Endothelial cell of umbilical vein (primary cell): ENCODE measurements at regions of chr1 and their contacts with region 1.

Region 1: DNA sequence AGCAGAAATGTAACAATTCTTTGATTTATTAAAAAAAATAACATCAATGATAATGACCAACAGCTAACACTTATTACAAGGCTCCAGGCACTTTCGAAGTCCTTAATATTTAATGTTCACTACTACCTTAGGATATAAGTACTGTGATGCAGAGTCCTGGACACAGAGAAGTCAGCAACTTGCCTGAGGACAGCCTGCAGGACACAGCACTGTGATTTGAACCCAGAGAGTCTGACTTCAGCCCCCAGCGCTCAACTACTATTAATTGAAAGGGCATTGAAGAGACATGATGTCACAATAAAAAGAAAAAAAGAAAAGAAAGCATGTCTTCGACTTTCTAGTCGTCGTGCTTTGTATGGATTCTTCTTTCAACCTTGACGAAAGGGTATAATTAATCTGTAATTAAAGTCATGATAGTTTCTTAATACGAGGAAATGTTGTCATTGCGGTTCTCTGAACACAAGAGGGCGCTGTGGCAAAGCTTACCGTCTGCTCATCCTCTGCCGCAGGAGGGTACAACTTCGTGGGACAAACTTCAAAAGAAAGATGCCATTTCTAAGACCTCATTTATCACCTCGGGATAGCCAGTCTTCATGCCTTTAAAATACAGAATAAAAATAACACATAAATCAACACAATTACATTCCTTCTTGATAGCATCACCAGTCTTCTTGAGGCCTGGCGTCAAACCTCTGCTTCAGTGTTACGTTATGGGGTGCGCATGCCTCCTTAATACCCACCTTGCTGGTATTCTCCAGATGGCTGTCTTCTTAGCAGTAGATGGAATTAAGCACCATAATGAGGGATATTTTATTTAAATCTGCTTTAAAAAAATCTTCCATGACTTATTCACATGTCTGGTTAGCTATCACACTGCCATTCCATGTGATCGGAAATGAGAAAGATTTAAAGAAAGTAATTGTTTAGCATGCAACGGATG is 240.1 kb downstream of the DISC1 start:
- DNase-seq: peak; percentile 71
- H3K4me3 ChIP-seq: no peak overlapping the region
- H3K27ac ChIP-seq: no peak overlapping the region
- H3K4me1 ChIP-seq: no peaks in the 10 kb centered on the region
- H3K27me3 ChIP-seq: no peaks in the 10 kb centered on the region
- CTCF ChIP-seq: peak; percentile 73 to 77
- POLR2A ChIP-seq: no peak

Region 2: DNA sequence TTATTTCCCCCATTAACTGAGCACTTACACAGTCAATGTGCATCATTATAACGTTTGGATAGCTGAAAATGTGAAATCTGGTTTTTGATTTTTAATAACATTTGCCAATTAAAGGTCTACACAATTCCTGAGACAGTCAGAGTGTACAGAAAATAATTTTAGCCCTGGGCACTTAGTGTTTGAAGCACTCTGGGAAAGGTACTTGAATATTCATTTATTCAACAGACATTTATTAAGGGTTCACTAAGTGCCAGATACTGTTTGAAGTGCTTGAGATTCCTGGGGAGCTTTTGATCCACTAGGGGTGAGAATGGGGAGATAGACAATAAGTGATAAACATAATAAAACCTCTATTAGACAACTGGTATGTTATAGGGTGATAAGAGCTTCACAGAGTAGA is 98.2 kb before region 1 on chr1:
- CTCF ChIA-PET with region 1: no interaction called
- POLR2A ChIA-PET with region 1: no interaction called
- dilution Hi-C with region 1: no loop called
- intact Hi-C with region 1: no loop called
- DNase-seq: no peak
- H3K4me3 ChIP-seq: no peak overlapping the region
- H3K27ac ChIP-seq: no peak overlapping the region
- H3K4me1 ChIP-seq: no peaks in the 10 kb centered on the region
- H3K27me3 ChIP-seq: no peaks in the 10 kb centered on the region
- CTCF ChIP-seq: no peak
- POLR2A ChIP-seq: no peak

Region 3: GRCh38 chr1:231814021-231814420 is 52.6 kb before region 1 on chr1:
- CTCF ChIA-PET with region 1: no interaction called
- POLR2A ChIA-PET with region 1: no interaction called
- dilution Hi-C with region 1: no loop called
- intact Hi-C with region 1: loop called (anchors 5 kb)
- DNase-seq: peak; percentile 93
- H3K4me3 ChIP-seq: no peak overlapping the region
- H3K27ac ChIP-seq: peak overlapping the region; percentile 50
- H3K4me1 ChIP-seq: peaks cover 22% of the 10 kb centered on the region
- H3K27me3 ChIP-seq: no peaks in the 10 kb centered on the region
- CTCF ChIP-seq: no peak
- POLR2A ChIP-seq: no peak

Region 4: DNA sequence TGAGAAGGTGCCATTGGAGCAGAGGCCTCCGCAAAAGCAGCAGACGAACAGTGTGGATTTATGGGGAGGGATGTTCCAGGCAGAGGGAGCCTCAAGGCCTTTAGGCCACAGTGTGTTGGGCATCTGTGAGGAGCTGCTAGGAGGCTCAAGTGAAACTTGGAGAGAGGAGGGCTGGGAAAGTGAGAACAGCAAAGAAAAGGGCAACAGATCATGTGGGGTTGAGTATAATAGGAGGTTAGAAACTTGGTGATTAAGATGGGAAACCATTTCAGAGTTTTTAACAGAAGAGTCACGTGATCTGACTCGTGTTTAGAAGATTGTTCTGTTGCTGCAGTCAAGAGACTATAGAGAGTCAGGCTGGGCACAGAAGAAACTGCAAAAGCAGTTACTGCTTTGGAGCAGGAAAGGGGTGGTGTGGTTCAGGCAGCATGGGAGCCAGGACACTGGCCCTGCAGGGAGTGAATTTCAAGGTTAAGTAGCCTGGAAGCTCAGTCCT is 37.0 kb after region 1 on chr1:
- CTCF ChIA-PET with region 1: no interaction called
- POLR2A ChIA-PET with region 1: no interaction called
- dilution Hi-C with region 1: no loop called
- intact Hi-C with region 1: no loop called
- DNase-seq: no peak
- H3K4me3 ChIP-seq: no peak overlapping the region
- H3K27ac ChIP-seq: no peak overlapping the region
- H3K4me1 ChIP-seq: no peaks in the 10 kb centered on the region
- H3K27me3 ChIP-seq: no peaks in the 10 kb centered on the region
- CTCF ChIP-seq: no peak
- POLR2A ChIP-seq: no peak

Region 5: GRCh38 chr1:231931846-231932454 is 65.3 kb after region 1 on chr1:
- CTCF ChIA-PET with region 1: interaction called, 8 read pairs
- POLR2A ChIA-PET with region 1: no interaction called
- dilution Hi-C with region 1: no loop called
- intact Hi-C with region 1: loop called (anchors 5 kb)
- DNase-seq: no peak
- H3K4me3 ChIP-seq: no peak overlapping the region
- H3K27ac ChIP-seq: no peak overlapping the region
- H3K4me1 ChIP-seq: peaks cover 20% of the 10 kb centered on the region
- H3K27me3 ChIP-seq: no peaks in the 10 kb centered on the region
- CTCF ChIP-seq: peak; percentile 42 to 53
- POLR2A ChIP-seq: no peak

Region 6: DNA sequence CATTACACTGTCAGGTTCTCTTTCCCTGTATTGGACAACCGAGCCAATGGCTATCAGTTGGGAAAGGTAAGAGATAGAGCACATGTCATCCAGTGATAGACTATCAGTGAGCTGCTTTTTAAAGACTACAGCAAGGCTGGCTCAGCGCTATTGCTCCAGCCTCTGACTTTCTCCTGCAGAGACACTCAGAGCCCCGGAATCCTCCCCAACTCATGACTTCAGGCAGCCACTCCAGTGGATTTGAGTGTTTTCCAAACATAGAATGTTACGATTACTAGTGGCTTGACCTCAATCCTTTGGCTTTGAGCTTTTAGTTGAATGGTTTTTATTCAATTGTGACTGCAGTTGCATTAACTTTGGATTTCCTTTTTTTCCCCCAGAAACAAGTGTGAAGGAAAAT is 91.8 kb after region 1 on chr1:
- CTCF ChIA-PET with region 1: no interaction called
- POLR2A ChIA-PET with region 1: no interaction called
- dilution Hi-C with region 1: no loop called
- intact Hi-C with region 1: no loop called
- DNase-seq: no peak
- H3K4me3 ChIP-seq: no peak overlapping the region
- H3K27ac ChIP-seq: no peak overlapping the region
- H3K4me1 ChIP-seq: no peaks in the 10 kb centered on the region
- H3K27me3 ChIP-seq: no peaks in the 10 kb centered on the region
- CTCF ChIP-seq: no peak
- POLR2A ChIP-seq: no peak

Region 7: GRCh38 chr1:231983588-231984193 is 117.0 kb after region 1 on chr1:
- CTCF ChIA-PET with region 1: interaction called, 16 read pairs
- POLR2A ChIA-PET with region 1: no interaction called
- dilution Hi-C with region 1: no loop called
- intact Hi-C with region 1: no loop called
- DNase-seq: no peak
- H3K4me3 ChIP-seq: no peak overlapping the region
- H3K27ac ChIP-seq: no peak overlapping the region
- H3K4me1 ChIP-seq: no peaks in the 10 kb centered on the region
- H3K27me3 ChIP-seq: no peaks in the 10 kb centered on the region
- CTCF ChIP-seq: peak in 1 of 2 donors; percentile 12
- POLR2A ChIP-seq: no peak

Region 8: DNA sequence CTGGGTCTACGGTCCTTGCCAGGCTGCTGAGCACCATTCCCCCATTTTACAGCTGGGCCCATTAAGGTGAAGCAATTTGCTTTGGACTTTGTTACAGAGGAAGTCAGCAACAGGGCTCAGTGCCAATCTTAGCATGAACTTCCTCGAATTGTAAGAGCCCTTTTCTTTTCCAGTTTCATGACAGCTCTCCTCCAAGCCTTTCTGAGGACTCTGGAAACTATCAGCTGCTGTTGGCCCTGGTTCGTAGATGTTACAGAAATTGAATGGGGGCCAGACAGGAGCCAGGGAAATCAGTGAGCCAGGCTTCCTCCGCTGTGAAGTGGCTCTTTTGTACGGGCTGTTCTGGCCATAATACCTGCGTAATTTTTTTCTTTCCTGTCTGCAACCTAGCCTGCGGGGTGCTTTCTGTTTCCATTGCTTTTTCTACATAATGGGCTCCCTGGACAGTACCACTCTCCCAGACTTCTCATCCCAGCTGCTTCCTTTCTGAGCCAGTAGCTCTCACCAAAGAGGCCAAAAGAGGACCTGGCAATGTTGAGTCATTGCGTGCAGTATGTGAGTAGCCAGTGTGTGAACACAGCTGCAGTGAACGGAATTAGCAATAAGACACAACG is 146.2 kb after region 1 on chr1:
- CTCF ChIA-PET with region 1: no interaction called
- POLR2A ChIA-PET with region 1: no interaction called
- dilution Hi-C with region 1: no loop called
- intact Hi-C with region 1: loop called (anchors 1 kb)
- DNase-seq: peak; percentile 97
- H3K4me3 ChIP-seq: peak overlapping the region in 1 of 3 experiments; percentile 14
- H3K27ac ChIP-seq: peak overlapping the region; percentile 80
- H3K4me1 ChIP-seq: peaks cover 27% of the 10 kb centered on the region
- H3K27me3 ChIP-seq: no peaks in the 10 kb centered on the region
- CTCF ChIP-seq: no peak
- POLR2A ChIP-seq: no peak

Region 9: DNA sequence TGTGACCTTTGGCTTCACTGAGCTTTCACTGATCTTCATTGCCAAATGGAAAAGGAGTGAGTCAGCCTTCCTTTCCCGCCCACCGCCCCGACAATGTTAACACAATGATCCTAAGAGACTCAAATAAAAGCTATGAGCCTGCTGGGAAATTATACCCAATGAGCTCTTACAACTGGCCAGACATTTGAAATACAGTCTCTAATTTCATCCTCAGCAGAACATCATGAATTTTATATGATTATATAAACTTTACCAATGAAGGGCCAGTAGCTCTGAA is 510.8 kb after region 1 on chr1:
- CTCF ChIA-PET with region 1: interaction called, 3 read pairs
- POLR2A ChIA-PET with region 1: no interaction called
- dilution Hi-C with region 1: no loop called
- intact Hi-C with region 1: loop called (anchors 10 kb)
- DNase-seq: peak; percentile 83
- H3K4me3 ChIP-seq: no peak overlapping the region
- H3K27ac ChIP-seq: no peak overlapping the region
- H3K4me1 ChIP-seq: peaks cover 5% of the 10 kb centered on the region
- H3K27me3 ChIP-seq: no peaks in the 10 kb centered on the region
- CTCF ChIP-seq: no peak
- POLR2A ChIP-seq: no peak

Region 10: GRCh38 chr1:233240829-233241682 is 1374.4 kb after region 1 on chr1:
- CTCF ChIA-PET with region 1: no interaction called
- POLR2A ChIA-PET with region 1: no interaction called
- dilution Hi-C with region 1: no loop called
- intact Hi-C with region 1: loop called (anchors 1 kb)
- DNase-seq: peak; percentile 65
- H3K4me3 ChIP-seq: no peak overlapping the region
- H3K27ac ChIP-seq: no peak overlapping the region
- H3K4me1 ChIP-seq: no peaks in the 10 kb centered on the region
- H3K27me3 ChIP-seq: no peaks in the 10 kb centered on the region
- CTCF ChIP-seq: peak; percentile 76 to 81
- POLR2A ChIP-seq: no peak